Lower leg skin (tissue), 4 donors: ENCODE measurements at regions of chrX and their contacts with region 1.

Region 1: DNA sequence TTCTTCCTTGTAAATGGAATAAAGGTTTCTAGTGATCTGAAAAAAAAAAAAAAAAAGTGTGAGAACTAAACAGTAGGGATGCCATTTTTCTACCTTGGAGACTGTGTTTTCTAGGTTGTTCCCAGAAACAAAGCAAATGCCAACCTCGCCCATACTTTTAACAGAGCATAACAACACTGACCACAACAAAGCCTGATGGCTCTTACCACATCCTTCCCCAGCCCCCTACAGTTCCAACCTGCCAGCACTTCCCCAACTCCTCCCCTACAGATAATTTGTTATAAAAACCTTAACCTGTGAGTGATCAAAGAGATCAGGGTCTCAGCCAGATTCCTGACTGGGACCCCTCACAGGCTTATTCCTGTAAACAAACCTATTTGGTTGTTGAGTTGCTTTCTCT is 940.0 kb downstream of the SH3BGRL start:
- DNase-seq: no peak
- H3K4me3 ChIP-seq: no peak overlapping the region
- CTCF ChIP-seq: no peak
- POLR2A ChIP-seq: no peak

Region 2: DNA sequence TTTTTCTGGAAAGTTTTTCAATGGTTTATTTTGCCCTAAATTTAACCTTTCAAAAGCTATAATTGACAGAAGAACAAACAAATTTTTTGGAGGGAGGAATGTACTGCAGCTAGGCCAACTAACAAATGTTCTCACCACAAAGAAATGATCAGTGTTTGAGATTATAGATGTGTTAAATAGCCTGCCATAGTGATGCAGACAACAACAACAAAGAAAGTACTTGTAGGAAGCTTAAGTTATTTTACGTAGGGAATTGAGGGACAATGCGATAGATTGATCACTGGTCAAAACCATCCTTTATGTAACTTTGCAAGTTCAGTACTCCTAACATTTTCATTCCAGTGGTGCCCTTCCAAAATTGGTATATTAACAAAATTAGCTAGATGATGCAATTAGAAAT is 599.7 kb before region 1 on chrX:
- intact Hi-C with region 1: loop called (anchors 5 kb)
- DNase-seq: no peak
- H3K4me3 ChIP-seq: no peak overlapping the region
- CTCF ChIP-seq: no peak
- POLR2A ChIP-seq: no peak